T-cell (primary cell): ENCODE measurements at regions of chr21 and their contacts with region 1.

Region 1: DNA sequence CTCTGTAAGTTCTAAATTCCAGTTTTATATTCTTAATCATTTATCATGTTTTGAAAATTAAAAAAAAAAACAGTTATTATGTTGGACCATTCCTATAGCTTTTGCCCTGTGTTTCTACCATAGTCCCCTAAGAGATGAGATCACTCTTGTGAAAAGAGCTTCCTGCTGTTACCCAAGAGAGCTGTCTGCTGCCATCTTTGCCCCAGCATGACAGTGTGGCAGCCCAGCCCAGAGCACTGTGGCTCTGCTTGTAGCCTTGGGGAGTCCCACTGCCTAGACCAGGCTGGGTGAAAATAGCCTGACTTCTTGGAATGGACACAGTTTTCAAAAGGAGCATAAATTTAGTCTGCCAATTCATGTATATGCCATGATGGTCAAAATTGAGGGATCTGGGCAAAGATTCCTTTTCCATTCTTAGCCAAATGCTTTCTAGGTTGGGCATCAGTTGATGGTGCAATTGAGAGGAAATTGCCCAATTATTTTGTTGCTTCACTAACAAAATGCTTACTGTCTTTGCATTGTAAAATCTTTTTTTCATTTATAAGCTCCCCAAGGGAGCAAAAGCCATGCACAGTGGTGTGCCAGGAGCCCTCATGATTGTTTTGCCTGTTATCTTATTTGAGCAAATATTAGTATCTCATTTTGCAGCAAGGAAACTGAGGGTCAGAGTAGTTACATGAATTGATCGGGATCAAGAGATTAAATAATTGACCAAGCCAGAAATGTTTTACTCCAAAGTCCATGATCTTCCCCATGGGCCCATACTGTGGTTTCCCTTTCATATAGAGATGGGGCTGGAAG is 72.8 kb downstream of the ETS2 start:
- DNase-seq: no peak
- ATAC-seq: no peak
- H3K4me3 ChIP-seq: no peak overlapping the region
- H3K4me3 Mint-ChIP-seq: no peak overlapping the region
- H3K27ac ChIP-seq: no peak overlapping the region
- H3K27ac Mint-ChIP-seq: no peak overlapping the region
- H3K4me1 ChIP-seq: no peaks in the 10 kb centered on the region
- H3K4me1 Mint-ChIP-seq: no peaks in the 10 kb centered on the region
- H3K27me3 ChIP-seq: peaks cover 0 to 6% of the 10 kb centered on the region in 2 experiments
- H3K27me3 Mint-ChIP-seq: peaks cover under 1 to 5% of the 10 kb centered on the region in 2 donors

Region 2: DNA sequence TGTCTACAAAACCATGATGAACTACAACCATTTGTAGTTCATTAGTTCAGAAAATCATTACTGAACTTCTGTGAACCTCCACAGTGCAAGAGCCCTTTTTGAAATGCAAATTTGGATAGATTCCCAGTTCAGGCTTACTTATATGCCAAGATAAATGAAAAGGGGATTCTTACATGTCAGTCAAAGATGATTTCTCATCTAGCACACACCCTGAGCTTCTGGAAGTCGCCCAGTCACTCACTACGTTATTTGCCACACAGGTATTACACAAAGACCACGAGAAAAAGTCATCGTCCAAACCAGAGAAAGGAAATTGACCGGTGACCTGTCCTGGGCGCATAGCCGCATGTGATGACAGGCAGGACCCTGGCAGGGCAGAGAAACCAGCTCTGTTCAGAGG is 31.0 kb before region 1 on chr21:
- CTCF ChIA-PET with region 1: no interaction called
- POLR2A ChIA-PET with region 1: no interaction called
- DNase-seq: no peak
- ATAC-seq: no peak
- H3K4me3 ChIP-seq: no peak overlapping the region
- H3K4me3 Mint-ChIP-seq: no peak overlapping the region
- H3K27ac ChIP-seq: no peak overlapping the region
- H3K27ac Mint-ChIP-seq: no peak overlapping the region
- H3K4me1 ChIP-seq: no peaks in the 10 kb centered on the region
- H3K4me1 Mint-ChIP-seq: no peaks in the 10 kb centered on the region
- H3K27me3 ChIP-seq: no peaks in the 10 kb centered on the region
- H3K27me3 Mint-ChIP-seq: peaks cover 2 to 4% of the 10 kb centered on the region in 2 donors

Region 3: DNA sequence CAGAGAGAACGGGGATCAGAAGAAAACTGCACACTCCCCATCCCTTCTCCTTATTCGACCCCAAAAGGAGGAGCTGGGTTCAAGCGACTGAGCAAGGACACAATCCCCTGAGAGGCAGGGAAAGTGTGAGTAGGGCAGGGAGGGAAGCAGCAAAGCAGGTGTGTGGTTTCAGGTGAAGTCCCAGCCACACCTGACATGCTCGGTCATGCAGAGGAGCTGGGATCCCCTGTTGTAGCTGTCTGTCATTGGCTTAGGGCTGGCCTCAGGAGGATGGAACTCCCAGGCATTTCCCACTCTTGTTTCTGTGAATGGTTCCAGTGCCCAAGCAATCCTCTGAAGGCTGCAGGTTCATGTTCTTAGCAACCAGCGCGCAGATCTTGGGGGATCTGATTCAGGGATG is 1817.7 kb after region 1 on chr21:
- CTCF ChIA-PET with region 1: no interaction called
- POLR2A ChIA-PET with region 1: interaction called in 1 of 2 experiments, 11 read pairs
- DNase-seq: no peak
- ATAC-seq: no peak
- H3K4me3 ChIP-seq: no peak overlapping the region
- H3K4me3 Mint-ChIP-seq: no peak overlapping the region
- H3K27ac ChIP-seq: no peak overlapping the region
- H3K27ac Mint-ChIP-seq: no peak overlapping the region
- H3K4me1 ChIP-seq: no peaks in the 10 kb centered on the region
- H3K4me1 Mint-ChIP-seq: no peaks in the 10 kb centered on the region
- H3K27me3 ChIP-seq: no peaks in the 10 kb centered on the region
- H3K27me3 Mint-ChIP-seq: no peaks in the 10 kb centered on the region